AG04449 (cell line): ENCODE measurements at regions of chr16 and their contacts with region 1.

Region 1: GRCh38 chr16:228818-229730 is at the start of gene LUC7L:
- DNase-seq: no peak
- H3K4me3 ChIP-seq: peak within 1 kb of the TSS; percentile 97
- CTCF ChIP-seq: no peak

Region 2: DNA sequence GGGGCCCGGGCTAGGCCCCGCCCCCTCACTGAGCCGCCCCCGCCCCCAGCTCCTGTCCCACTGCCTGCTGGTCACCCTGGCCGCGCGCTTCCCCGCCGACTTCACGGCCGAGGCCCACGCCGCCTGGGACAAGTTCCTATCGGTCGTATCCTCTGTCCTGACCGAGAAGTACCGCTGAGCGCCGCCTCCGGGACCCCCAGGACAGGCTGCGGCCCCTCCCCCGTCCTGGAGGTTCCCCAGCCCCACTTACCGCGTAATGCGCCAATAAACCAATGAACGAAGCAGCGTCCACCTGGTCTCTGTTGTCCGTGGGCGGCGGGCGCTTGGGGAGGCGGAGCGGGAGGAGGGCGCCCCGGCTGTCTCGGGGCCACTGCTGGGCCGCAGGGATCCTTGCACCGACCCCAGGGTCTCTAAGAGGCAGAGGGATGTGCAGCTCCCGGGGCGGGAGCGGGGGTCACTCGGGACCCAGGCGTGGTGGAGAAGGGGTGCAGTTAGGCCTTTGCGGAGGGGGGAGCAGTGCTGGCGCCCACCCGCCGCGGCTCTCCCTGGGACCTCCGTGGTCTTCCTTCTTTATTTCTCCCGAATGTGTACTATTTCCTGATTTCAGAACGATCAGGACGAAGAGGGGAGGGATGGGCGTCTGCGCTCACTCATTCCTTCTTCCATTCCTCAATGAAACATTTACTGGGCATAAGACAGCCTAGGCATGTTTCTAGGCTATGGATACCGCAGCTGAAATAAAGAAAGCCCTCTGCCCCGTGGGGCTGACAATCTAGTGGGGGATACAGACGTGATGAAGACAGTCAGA is 74.6 kb before region 1 on chr16:
- CTCF ChIA-PET with region 1: no interaction called
- POLR2A ChIA-PET with region 1: no interaction called
- DNase-seq: no peak
- H3K4me3 ChIP-seq: peak overlapping the region; percentile 46
- CTCF ChIP-seq: no peak

Region 3: DNA sequence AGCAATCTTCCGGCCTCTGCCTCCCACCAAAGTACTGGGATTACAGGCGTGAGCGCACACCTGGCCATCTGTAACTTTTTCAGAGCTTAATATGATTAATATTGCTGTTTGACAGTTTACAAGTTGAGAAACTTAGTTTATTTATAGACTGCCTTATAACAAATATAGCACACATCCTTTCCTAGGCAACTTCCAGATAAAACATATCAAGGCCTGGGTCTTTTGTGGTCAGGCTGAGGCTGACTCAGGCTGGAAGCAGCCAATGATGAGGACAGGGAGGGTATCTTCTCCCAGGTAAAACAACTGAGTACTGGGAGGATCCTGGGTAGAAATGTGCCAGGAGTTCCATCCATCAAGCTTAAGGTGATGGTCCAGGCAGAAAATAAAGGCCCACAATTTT is 16.1 kb before region 1 on chr16:
- CTCF ChIA-PET with region 1: interaction called, 11 read pairs
- POLR2A ChIA-PET with region 1: interaction called, 3 read pairs
- DNase-seq: no peak
- H3K4me3 ChIP-seq: no peak overlapping the region
- CTCF ChIP-seq: no peak